MCF 10A (cell line): ENCODE measurements at regions of chr1 and their contacts with region 1.

Region 1: GRCh38 chr1:209565759-209566678 is 17.5 kb upstream of the CAMK1G start:
- DNase-seq: peak; percentile 97
- H3K4me3 Mint-ChIP-seq: peak overlapping the region; percentile 49
- H3K27ac Mint-ChIP-seq: no peak overlapping the region
- H3K4me1 Mint-ChIP-seq: peaks cover 62% of the 10 kb centered on the region
- H3K27me3 Mint-ChIP-seq: peaks cover 3% of the 10 kb centered on the region
- CTCF ChIP-seq: peak; percentile 98

Region 2: DNA sequence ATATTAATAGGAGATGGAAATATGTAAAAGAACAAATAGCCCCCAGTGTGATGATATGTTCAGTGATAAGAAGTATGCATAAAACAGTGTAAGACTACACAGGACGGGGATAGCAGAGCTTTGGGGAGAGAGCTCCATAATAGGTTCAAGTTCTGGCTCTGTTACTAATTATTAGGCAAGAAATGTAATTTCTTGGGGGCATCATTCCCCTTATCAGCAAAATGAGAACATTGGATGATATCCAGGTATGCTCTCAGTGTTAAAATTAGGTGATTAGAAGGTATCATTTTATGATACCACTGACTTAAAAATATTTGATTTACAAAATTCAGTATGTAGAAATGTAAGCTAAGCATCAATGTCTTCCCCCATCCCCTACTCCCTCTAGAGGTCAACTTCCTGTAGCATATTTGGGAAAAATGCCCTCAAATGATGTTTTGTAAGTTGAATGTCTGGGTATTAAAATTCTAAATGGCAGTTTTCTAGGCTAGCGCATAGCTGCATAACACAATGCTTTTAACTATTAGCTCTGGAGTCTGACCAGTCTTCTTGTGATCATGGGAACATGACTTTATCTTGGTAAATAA is 568.2 kb before region 1 on chr1:
- CTCF ChIA-PET with region 1: no interaction called
- POLR2A ChIA-PET with region 1: no interaction called
- intact Hi-C with region 1: no loop called
- DNase-seq: peak; percentile 70
- H3K4me3 Mint-ChIP-seq: no peak overlapping the region
- H3K27ac Mint-ChIP-seq: no peak overlapping the region
- H3K4me1 Mint-ChIP-seq: no peaks in the 10 kb centered on the region
- H3K27me3 Mint-ChIP-seq: no peaks in the 10 kb centered on the region
- CTCF ChIP-seq: peak; percentile 82

Region 3: DNA sequence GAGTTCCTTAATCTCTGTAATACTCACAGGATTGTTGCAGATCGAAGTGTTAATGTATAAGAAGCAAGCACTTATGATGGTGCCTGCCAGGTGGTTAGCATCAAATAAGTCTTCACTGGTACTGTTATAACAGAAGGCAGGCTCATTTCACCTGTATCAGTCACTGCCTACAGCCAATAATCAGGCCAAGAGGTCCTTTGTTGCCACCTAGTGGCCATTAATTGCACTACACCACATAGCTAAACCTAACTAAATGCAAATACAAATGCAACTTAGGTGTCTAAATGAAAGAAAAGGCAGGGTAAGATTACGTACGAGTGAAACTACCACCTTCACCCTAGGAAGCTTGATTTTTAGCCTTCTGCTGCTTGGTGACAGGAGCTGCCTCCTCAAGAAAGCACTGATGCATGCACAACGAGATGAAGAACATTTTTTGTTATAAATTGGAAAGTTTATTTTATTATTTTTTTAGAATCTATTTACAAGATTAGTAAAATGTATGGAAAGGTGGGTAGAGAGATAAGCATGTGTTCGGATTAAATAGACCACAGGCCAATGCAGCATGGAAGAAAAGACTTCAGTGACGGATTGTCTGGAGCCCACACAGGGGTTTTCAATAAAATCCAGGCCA is 317.3 kb before region 1 on chr1:
- CTCF ChIA-PET with region 1: interaction called, 31 read pairs
- POLR2A ChIA-PET with region 1: interaction called, 3 read pairs
- intact Hi-C with region 1: loop called (anchors 2 kb)
- DNase-seq: peak; percentile 91
- H3K4me3 Mint-ChIP-seq: no peak overlapping the region
- H3K27ac Mint-ChIP-seq: no peak overlapping the region
- H3K4me1 Mint-ChIP-seq: peaks cover 5% of the 10 kb centered on the region
- H3K27me3 Mint-ChIP-seq: no peaks in the 10 kb centered on the region
- CTCF ChIP-seq: peak; percentile 99

Region 4: DNA sequence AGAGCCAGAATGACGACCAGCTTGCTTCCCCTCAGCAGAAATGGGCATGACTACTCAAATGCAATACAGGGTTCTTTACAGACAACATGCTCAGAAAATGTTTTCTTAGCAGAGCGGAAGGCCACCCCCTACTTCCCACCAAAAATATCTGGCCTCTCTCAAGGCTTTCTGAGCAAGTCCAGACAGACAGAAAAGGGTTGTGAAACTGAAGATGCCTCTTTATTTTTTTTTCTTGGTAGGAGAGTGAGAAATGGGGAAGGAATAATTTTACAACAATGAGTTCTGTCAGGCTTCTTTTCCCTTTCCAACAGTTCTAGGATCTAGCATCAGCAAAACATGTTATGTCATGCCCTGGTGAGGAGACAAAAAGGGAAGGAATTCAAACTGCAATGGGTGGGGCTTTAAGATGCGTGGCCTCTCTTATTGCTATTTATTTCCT is 154.5 kb before region 1 on chr1:
- CTCF ChIA-PET with region 1: interaction called, 25 read pairs
- POLR2A ChIA-PET with region 1: interaction called, 34 read pairs
- intact Hi-C with region 1: no loop called
- DNase-seq: peak; percentile 99
- H3K4me3 Mint-ChIP-seq: peak overlapping the region; percentile 44
- H3K27ac Mint-ChIP-seq: peak overlapping the region; percentile 89
- H3K4me1 Mint-ChIP-seq: peaks cover 70% of the 10 kb centered on the region
- H3K27me3 Mint-ChIP-seq: no peaks in the 10 kb centered on the region
- CTCF ChIP-seq: no peak

Region 5: DNA sequence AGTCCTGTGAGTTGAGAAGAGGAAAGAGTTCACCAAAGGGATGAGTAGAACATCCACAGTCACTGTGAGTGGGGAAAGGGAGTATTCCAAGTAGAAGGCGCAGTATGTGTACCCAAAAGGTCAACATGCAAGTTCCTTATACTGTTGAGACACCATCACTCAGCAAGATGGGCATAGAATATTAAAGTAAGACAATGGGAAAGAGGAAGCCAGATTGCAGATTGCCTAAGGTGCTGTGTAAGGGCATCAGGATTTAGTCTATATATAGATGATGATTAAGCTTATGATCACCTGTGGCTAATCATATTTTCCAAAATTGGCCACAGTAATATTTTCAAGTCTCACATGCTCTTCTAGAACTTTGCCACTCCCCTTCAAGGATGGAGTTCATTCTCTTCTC is 102.6 kb before region 1 on chr1:
- CTCF ChIA-PET with region 1: interaction called, 16 read pairs
- POLR2A ChIA-PET with region 1: no interaction called
- intact Hi-C with region 1: no loop called
- DNase-seq: no peak
- H3K4me3 Mint-ChIP-seq: no peak overlapping the region
- H3K27ac Mint-ChIP-seq: no peak overlapping the region
- H3K4me1 Mint-ChIP-seq: no peaks in the 10 kb centered on the region
- H3K27me3 Mint-ChIP-seq: peaks cover 2% of the 10 kb centered on the region
- CTCF ChIP-seq: no peak

Region 6: GRCh38 chr1:209542585-209542984 is 23.4 kb before region 1 on chr1:
- CTCF ChIA-PET with region 1: interaction called, 144 read pairs
- POLR2A ChIA-PET with region 1: interaction called, 26 read pairs
- intact Hi-C with region 1: no loop called
- DNase-seq: peak; percentile 89
- H3K4me3 Mint-ChIP-seq: no peak overlapping the region
- H3K27ac Mint-ChIP-seq: peak overlapping the region; percentile 68
- H3K4me1 Mint-ChIP-seq: peaks cover 52% of the 10 kb centered on the region
- H3K27me3 Mint-ChIP-seq: no peaks in the 10 kb centered on the region
- CTCF ChIP-seq: no peak

Region 7: DNA sequence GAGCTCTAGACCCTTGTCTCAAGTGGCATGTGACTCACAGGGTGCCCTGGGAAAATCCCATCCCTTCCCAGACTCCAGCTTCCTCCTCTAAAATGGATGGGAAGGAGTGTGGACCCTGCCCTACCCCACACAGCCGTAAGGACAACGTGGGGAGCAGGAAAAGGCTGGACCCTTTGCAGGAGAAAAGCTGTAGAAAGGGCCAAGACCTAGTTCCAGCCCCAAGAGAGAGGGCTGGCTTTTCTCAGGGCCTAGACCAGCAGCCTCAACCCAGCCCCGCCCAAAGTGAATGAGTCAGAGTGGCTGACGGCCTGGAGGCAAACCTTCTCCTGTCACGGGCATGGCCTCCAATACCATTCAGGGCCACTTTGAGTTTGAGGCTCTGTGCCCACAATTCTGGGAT is 85.1 kb after region 1 on chr1:
- CTCF ChIA-PET with region 1: interaction called, 11 read pairs
- POLR2A ChIA-PET with region 1: interaction called, 39 read pairs
- intact Hi-C with region 1: no loop called
- DNase-seq: peak; percentile 99
- H3K4me3 Mint-ChIP-seq: peak overlapping the region; percentile 83
- H3K27ac Mint-ChIP-seq: peak overlapping the region; percentile 99
- H3K4me1 Mint-ChIP-seq: peaks cover 80% of the 10 kb centered on the region
- H3K27me3 Mint-ChIP-seq: no peaks in the 10 kb centered on the region
- CTCF ChIP-seq: no peak

Region 8: GRCh38 chr1:209784265-209785169 is 218.5 kb after region 1 on chr1 and contains the start of gene C1orf74:
- CTCF ChIA-PET with region 1: interaction called, 3 read pairs
- POLR2A ChIA-PET with region 1: interaction called, 13 read pairs
- intact Hi-C with region 1: no loop called
- DNase-seq: peak; percentile 100
- H3K4me3 Mint-ChIP-seq: peak within 1 kb of the TSS; percentile 90
- H3K27ac Mint-ChIP-seq: peak within 1 kb of the TSS; percentile 96
- H3K4me1 Mint-ChIP-seq: peaks cover 22% of the 10 kb centered on the region
- H3K27me3 Mint-ChIP-seq: no peaks in the 10 kb centered on the region
- CTCF ChIP-seq: no peak
- total RNA-seq, gene C1orf74: 6.8 and 7.1 TPM in 2 replicates